ENCODE measurements at regions of chr4 and their contacts with region 1.

Region 1: DNA sequence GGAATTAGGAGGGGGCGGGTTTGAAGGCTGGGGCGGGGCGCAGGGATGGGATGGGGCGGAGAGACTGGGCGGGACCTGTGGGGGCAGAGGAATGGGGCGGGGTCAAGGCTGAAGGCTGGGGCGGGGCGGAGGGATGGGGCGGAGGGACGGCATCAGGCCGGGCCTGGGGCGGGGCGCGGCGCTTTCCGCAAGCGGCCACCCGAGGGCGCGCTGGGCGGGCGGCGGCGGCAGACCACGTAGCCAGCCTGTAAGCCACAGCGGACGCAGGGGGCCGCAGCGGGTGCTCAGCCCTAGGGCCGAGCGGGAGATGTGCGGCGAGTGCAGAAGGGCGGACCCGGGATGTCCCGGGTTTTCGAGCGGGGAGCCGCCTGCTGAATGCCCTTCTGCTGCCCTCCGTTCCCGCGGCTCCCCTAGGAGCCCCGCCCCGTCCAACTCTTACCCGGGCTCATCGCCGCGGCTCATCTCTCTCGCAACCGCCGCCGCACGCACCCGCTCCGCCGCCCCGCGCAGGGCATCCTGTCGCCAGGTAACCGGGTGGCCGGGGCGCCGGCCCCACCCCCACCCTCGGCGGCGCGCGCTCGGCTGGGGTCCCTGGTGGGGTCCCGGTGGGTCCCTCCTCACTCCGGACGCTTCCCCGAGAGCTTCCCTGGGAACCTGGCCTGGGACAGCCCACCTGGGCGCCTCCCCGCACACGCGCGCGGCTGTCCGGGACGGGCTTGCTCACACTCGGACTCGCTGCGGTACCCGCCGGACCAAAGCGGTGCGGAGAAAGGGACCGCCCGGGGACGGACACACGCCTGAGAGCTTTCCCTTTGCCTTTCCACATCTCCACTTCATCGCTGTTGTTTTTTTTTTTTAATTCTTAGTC is at the start of gene CCDC110:
- DNase-seq: peak; percentile 93
- ATAC-seq: peak; percentile 99
- total RNA-seq, gene CCDC110: 1.0 TPM

Region 2: DNA sequence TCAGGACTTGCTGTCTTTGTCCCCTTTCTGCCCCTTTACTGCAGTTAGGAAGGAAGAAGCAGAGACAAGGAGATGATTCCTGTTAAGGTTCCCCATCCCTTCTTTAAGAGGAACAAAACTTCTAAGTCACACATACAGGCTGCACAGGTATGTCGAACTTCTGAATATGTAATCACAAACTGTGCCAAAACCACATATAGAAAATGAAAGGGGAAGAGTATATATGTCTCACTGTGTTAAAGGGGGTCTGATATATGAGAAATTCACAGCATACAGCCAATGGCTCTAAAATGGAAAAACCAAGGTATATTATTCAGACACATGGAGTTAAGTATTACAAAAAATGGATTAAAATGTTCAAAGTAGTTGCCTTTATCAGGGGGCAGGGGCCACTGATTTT is 279.4 kb before region 1 on chr4:
- intact Hi-C with region 1: no loop called
- DNase-seq: no peak
- ATAC-seq: no peak

Region 3: GRCh38 chr4:185318679-185319078 is 152.8 kb before region 1 on chr4:
- intact Hi-C with region 1: no loop called
- DNase-seq: no peak
- ATAC-seq: no peak

Region 4: GRCh38 chr4:185425647-185426352 is 45.7 kb before region 1 on chr4 and contains the start of gene UFSP2:
- intact Hi-C with region 1: loop called (anchors 2 kb)
- DNase-seq: peak; percentile 95
- ATAC-seq: peak; percentile 97
- total RNA-seq, gene UFSP2: 42.0 TPM

Region 5: GRCh38 chr4:185534866-185535611 is 63.6 kb after region 1 on chr4 and contains the start of gene PDLIM3:
- intact Hi-C with region 1: loop called (anchors 2 kb)
- DNase-seq: peak; percentile 80
- ATAC-seq: peak; percentile 89
- total RNA-seq, gene PDLIM3: 281 TPM

Region 6: DNA sequence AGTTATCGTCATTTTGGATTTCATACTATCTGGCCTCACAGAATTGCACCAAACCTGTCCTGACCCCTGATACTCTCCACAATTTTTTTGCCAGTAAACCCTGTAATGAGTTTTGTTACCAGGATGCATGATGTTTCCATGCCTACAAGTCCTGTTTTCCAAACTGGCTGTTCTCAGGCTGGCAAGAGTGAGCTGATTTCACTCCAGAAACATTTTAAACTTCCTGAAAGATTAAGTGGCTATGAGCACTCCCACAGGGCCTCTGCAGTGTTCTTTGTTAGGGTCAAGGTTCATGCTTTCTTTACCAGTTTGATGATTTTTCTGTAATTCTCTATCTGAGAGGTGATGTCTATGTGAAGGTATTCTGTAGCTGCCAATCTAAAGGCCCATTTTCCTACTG is 95.5 kb after region 1 on chr4:
- intact Hi-C with region 1: loop called (anchors 1 kb)
- DNase-seq: no peak
- ATAC-seq: peak; percentile 85

Region 7: DNA sequence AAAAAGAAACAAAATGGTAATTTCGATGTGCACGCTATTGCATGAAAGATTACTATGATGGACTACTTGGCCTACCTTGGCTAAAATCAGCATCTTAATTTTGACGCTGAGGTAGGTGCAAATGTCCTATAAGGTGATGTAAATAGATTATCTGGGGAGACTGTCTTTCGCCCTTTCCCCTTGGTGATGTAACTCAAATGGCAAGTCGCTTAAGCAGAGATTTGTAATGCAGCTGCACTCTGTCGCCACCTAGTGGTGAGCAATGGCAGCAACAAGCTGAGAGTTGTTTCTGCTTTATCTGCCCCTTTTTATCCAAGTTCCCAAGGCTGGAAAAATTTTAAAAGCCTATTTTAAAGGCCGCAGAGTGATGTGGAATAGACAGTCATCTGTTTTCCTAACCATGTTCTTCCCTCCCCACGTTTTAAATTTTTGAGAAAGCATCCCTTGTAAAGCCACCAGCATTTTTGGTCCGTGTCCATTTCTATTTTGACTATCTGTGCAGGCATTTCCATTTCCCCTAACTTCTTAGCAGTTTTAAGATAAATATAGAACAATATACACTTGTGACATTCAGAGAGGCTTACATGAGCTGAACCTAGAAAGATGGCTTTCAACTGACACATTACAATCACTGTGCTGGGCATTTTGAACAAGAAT is 126.2 kb after region 1 on chr4:
- intact Hi-C with region 1: loop called (anchors 1 kb)
- DNase-seq: peak; percentile 80
- ATAC-seq: peak; percentile 56

Region 8: DNA sequence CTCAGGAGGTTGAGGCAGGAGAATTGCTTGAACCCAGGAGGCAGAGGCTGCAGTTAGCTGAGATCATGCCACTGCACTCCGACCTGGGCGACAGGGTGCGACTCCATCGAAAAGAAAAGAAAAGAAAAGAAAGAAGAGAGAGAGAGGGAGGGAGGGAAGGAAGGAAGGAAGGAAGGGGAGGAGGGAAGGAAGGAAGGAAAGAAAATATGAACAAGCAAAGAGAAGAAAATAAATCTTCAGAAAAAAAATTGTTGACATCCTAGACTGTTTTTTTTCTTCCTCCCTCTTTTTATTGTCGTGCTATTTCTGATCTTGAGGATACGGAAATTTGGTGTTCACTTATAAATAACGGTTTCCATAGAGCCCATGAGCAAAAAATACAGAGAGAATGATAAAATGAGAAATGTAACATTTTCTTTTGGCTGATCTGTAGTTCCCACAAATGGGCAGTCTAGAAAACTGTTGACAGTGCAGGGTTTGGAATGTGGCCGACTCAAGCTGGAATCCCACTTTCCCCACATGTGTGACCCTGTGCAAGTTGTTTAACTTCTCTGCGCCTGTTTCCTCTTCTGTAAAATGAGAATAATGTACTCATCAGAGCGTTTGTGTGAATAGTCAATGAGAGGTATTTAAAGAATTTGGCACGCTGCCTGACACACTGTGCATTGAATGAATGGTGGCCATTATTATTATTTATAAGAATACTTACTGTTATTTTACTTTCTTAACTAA is 321.1 kb after region 1 on chr4:
- intact Hi-C with region 1: loop called (anchors 5 kb)
- DNase-seq: no peak
- ATAC-seq: no peak

Region 9: GRCh38 chr4:186037692-186038658 is 566.5 kb after region 1 on chr4:
- intact Hi-C with region 1: loop called (anchors 5 kb)
- DNase-seq: no peak
- ATAC-seq: peak; percentile 88